Mucosa of descending colon (tissue), 3 donors: ENCODE measurements at regions of chr20 and their contacts with region 1.

Region 1: DNA sequence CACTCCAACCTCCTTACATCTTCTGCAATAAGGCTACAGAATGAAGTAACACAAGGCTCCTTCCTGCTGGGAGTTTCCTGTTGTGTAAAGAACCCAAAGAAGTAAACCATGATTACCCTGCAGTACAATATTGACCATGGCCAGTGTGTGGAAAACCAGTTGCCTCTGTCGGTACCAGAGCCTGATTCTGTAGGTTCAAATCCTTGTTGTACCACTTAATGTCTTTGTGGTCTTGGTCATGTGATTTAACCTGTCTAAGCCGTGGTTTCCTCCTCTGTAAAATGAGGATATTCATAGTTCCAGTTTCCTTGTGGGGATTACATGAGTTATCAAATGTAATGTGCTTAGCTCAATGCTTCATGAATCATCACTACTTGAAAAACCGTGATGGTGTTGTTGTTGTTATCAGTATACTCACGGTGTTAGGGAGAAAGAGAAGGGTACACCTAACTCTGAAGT is 60.3 kb upstream of the PRELID3B start:
- DNase-seq: no peak
- ATAC-seq: no peak
- H3K4me3 ChIP-seq: no peak overlapping the region
- H3K4me1 ChIP-seq: no peaks in the 10 kb centered on the region
- CTCF ChIP-seq: no peak

Region 2: DNA sequence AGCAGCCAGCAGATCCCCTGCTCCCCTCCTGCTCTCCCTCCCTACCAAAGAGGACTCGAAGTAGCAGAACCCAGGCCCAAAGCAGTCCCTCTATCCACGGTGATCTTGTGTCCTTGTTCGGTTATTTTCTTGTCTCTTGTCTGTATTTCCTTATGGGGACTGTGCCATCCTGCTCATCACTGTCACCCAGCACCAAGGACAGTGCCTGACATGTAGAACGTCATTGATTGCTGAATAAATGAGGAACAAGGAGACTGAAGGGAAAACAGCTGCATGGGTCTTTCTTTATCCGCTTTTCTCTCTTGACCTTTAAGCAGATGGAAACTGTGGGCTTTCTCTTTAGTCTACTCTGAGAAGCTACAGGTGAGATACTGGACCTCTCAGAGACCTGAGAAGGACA is 31.3 kb after region 1 on chr20:
- intact Hi-C with region 1: no loop called
- DNase-seq: no peak
- ATAC-seq: no peak
- H3K4me3 ChIP-seq: no peak overlapping the region
- H3K4me1 ChIP-seq: peaks cover 7% of the 10 kb centered on the region
- CTCF ChIP-seq: no peak

Region 3: GRCh38 chr20:59159493-59160376 is 56.9 kb after region 1 on chr20:
- intact Hi-C with region 1: no loop called
- DNase-seq: peak in 2 of 3 donors; percentile 62 to 65
- ATAC-seq: peak; percentile 75
- H3K4me3 ChIP-seq: no peak overlapping the region
- H3K4me1 ChIP-seq: peaks cover 3% of the 10 kb centered on the region
- CTCF ChIP-seq: no peak

Region 4: GRCh38 chr20:59191756-59192532 is 89.1 kb after region 1 on chr20:
- intact Hi-C with region 1: loop called in 1 of 2 experiments (anchors 10 kb)
- DNase-seq: no peak
- ATAC-seq: no peak
- H3K4me3 ChIP-seq: no peak overlapping the region
- H3K4me1 ChIP-seq: peaks cover 3% of the 10 kb centered on the region
- CTCF ChIP-seq: no peak